Sigmoid colon (tissue), 7 donors: ENCODE measurements at regions of chr11 and their contacts with region 1.

Region 1: GRCh38 chr11:123020968-123021367 is 39.3 kb upstream of the BSX start:
- DNase-seq: no peak
- H3K4me3 ChIP-seq: no peak overlapping the region
- H3K27ac ChIP-seq: no peak overlapping the region
- H3K4me1 ChIP-seq: peaks cover 0 to 3% (median 0%) of the 10 kb centered on the region in 4 donors
- H3K27me3 ChIP-seq: peaks cover 0 to 9% (median 0%) of the 10 kb centered on the region in 3 donors
- CTCF ChIP-seq: peak in 1 of 4 experiments; percentile 38
- EP300 ChIP-seq: no peak
- POLR2A ChIP-seq: no peak

Region 2: DNA sequence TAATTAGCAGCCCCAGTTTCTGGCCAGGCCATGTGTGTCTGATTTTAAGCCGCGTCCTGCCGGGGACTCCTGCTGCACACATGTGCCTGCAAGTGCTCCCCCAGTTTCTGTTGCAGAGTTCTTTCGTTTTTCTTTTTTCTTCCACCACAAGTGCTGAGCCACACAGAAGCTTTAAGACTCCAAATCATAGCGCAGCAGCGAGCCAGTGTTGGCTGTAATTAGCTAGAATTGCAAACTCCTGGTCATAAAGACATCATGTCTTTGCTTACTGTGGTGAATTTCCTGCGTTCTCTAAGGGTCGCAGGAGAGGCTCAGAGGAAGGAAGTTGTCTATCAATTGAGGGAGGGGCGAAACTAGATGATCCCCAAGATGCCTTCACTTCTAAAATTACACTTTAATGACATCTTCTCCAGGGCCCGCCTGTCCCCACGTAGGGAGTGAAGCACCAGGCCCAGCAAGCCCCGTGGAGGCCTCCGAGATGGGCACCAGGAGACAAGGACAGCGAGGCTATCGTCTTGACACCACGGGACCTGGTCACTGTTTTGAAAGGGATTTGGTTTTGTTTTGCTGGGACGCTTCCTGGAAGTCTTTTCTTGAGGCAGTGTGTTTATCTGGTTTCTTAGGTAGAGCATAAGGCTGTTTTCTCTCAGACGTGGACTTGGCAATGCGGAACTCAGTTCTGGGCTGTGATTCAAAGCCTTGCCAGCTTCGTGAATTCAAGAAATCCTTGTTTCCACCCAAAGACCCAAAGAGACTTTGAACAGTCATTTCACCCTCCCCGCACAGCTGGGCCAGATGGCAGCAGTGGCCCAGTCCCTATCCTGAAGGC is 293.7 kb before region 1 on chr11:
- intact Hi-C with region 1: no loop called
- DNase-seq: no peak
- H3K4me3 ChIP-seq: peak overlapping the region in 2 of 4 donors; percentile 9 to 22
- H3K27ac ChIP-seq: peak overlapping the region in 2 of 4 donors; percentile 26 to 39
- H3K4me1 ChIP-seq: peaks cover 0 to 18% (median 13%) of the 10 kb centered on the region in 4 donors
- H3K27me3 ChIP-seq: no peaks in the 10 kb centered on the region
- CTCF ChIP-seq: no peak
- EP300 ChIP-seq: no peak
- POLR2A ChIP-seq: no peak

Region 3: DNA sequence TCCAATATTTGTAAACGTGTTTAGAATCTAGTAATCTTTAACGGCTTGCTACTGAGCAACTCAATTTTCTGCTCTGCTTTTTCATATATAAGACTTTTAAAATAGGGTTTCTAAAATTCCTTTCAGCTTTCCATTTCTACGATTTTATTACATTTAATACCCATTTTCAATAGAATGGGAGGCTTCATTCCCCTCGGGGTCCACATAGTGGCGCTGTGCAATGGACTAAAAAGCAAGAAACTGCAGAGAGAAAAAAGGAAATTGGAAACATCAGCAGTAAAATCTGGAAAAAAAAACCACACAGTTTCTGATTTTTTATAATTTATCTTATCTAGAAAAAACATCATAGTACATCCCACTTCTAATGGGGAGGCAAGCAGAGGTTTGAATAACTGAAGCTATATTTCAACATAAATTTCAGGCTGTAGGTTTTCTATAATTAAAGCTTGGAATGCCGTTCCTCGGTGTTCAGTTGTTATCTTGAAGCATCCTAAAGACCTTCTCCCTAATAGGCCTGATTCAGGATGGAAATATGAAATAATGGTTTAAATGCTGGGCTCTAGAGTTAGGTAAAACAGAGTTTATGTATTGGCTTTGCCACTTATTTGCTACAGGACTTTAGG is 157.2 kb before region 1 on chr11:
- intact Hi-C with region 1: loop called (anchors 1 kb)
- DNase-seq: no peak
- H3K4me3 ChIP-seq: no peak overlapping the region
- H3K27ac ChIP-seq: no peak overlapping the region
- H3K4me1 ChIP-seq: no peaks in the 10 kb centered on the region
- H3K27me3 ChIP-seq: no peaks in the 10 kb centered on the region
- CTCF ChIP-seq: peak; percentile 43 to 65 (median 48)
- EP300 ChIP-seq: no peak
- POLR2A ChIP-seq: no peak

Region 4: DNA sequence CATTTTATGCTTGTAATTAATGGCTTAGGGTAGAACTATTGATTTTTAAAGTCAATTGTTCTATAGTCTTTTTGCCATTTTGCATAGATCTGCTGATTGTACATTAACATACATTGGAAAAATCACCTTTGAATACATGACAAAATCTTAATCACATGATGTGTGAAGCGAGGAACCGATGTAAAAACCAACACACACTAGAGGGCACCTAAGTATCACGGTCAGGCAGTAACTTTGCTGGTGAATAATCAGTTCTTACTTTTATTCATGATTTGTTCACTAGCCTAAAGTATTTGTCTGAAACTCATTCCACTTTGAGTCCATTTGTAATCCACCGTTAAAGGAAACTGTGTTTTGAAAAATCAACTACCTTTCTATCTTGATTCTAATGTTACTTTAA is 110.2 kb before region 1 on chr11:
- intact Hi-C with region 1: loop called (anchors 1 kb)
- DNase-seq: no peak
- H3K4me3 ChIP-seq: no peak overlapping the region
- H3K27ac ChIP-seq: no peak overlapping the region
- H3K4me1 ChIP-seq: no peaks in the 10 kb centered on the region
- H3K27me3 ChIP-seq: no peaks in the 10 kb centered on the region
- CTCF ChIP-seq: no peak
- EP300 ChIP-seq: no peak
- POLR2A ChIP-seq: no peak

Region 5: DNA sequence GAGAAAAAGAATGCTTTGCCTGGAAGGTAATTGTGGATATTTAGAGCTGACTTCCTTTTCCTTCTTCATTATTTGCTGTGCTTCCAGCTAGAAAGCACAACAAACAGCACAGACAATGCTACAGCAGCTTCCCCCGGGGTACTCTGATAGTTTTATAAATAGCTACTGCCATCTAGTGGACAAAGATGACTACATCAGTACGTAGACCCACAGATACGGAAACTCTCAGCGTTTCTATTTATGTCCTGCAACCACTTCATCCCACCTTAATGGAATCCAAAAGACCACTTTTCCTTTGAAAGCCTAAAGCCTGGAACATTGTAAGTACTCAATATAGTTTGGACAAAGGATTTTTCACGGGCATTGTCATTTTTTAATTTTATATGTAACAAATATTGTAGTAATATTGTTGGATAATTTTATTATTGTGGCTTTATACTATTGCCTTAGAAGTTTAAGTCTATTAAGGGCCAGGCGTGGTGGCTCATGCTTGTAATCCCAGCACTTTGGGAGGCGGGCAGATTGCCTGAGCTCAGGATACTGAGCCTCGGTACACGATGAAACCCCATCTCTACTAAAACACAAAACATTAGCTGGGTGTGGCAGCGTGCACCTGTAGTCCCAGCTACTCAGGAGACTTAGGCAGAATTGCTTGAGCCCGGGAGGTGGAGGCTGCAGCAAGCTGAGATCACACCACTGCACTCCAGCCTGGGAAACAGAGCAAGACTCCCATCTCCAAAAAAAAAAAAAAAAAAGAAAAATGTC is 33.5 kb after region 1 on chr11:
- intact Hi-C with region 1: no loop called
- DNase-seq: no peak
- H3K4me3 ChIP-seq: no peak overlapping the region
- H3K27ac ChIP-seq: peak overlapping the region in 2 of 4 donors; percentile 4 to 28
- H3K4me1 ChIP-seq: peaks cover 0 to 36% (median 26%) of the 10 kb centered on the region in 4 donors
- H3K27me3 ChIP-seq: no peaks in the 10 kb centered on the region
- CTCF ChIP-seq: peak in 3 of 4 experiments; percentile 48 to 71 (median 63)
- EP300 ChIP-seq: no peak
- POLR2A ChIP-seq: no peak